Activated naive CD4-positive, alpha-beta T cell treated with anti-CD3 and anti-CD28 coated beads for 36 hours (primary cell): ENCODE measurements at regions of chr2 and their contacts with region 1.

Region 1: GRCh38 chr2:1136057-1136456 is 185.4 kb downstream of the SNTG2 start:
- DNase-seq: no peak
- H3K4me3 Mint-ChIP-seq: no peak overlapping the region
- H3K27ac Mint-ChIP-seq: no peak overlapping the region
- H3K4me1 Mint-ChIP-seq: peaks cover 36% of the 10 kb centered on the region
- H3K27me3 Mint-ChIP-seq: no peaks in the 10 kb centered on the region

Region 2: GRCh38 chr2:264660-265468 is 871.2 kb before region 1 on chr2 and contains the start of gene ACP1:
- CTCF ChIA-PET with region 1: no interaction called
- intact Hi-C with region 1: loop called (anchors 10 kb)
- DNase-seq: peak; percentile 94
- H3K4me3 Mint-ChIP-seq: peak within 1 kb of the TSS; percentile 91
- H3K27ac Mint-ChIP-seq: peak within 1 kb of the TSS; percentile 90
- H3K4me1 Mint-ChIP-seq: peaks cover 40% of the 10 kb centered on the region
- H3K27me3 Mint-ChIP-seq: no peaks in the 10 kb centered on the region
- total RNA-seq, gene ACP1: 144 to 147 TPM

Region 3: DNA sequence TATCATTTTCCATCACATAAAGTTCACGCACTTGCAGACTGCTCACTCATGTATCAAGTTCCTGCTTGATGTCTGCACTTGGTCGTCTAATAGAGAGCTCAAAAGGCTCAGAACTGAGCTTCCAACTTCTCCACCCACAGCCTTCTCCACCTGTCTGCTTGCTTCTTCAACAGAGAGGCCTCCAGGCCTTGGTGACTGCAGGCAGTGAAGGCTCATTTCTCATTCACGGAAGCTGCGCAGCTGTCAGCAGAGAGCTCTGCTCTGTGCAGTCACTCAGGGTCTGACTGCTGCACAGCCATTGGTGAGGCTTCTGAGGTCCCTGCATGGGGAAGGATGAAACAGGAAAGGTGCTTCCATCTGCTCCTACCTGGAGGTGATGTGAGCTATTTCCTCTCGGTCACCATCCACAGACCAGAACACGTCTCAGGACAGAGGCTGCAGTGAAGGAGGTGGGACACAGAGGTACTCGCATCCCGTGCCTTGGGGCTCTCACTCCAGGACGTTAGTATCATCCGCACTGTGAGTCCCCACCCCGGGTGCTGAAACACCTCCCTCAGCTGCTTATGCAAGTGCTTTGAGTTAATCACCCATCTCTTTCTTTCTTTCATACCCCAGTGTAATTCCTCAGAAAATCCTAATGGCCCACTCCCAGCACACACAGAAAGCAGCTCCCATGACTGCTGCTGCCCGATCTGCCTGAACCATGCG is 585.0 kb before region 1 on chr2:
- CTCF ChIA-PET with region 1: no interaction called
- intact Hi-C with region 1: no loop called
- DNase-seq: no peak
- H3K4me3 Mint-ChIP-seq: no peak overlapping the region
- H3K27ac Mint-ChIP-seq: no peak overlapping the region
- H3K4me1 Mint-ChIP-seq: no peaks in the 10 kb centered on the region
- H3K27me3 Mint-ChIP-seq: peaks cover 10% of the 10 kb centered on the region

Region 4: DNA sequence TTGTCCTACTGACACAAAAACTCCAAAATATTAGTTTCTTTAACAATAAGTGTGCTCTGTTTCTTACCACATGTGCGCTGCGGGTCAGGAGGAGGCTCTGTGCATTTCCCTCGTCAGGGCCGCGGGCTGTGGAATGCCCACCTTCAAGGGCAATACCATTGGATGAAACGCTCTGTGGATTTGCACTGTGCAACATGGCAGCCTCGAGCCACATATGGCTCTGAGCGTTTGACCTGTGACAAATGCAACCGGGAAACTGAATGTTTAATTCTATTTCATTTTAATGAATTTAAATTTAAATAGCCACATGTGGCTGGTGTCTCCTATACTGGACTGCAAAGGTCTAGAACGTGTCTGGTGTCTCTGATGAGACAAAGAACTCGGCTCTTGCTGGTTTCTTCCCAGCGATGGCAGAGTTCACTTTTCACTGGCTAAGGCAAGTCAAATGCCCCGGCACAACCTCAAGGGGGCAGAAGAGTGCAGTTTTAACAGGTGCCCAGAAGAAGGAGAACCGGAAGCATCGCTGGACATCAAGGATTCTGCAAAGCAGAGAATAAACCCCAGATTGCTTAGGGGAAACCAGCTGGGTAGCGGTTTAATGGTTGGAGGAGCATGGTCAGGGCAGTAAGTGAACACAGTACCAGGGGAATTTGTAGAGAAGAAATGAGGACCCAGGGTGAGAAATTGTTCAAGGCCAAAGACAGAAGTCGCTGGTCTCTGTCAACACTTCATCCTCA is 421.9 kb before region 1 on chr2:
- CTCF ChIA-PET with region 1: no interaction called
- intact Hi-C with region 1: loop called (anchors 10 kb)
- DNase-seq: peak; percentile 58
- H3K4me3 Mint-ChIP-seq: no peak overlapping the region
- H3K27ac Mint-ChIP-seq: no peak overlapping the region
- H3K4me1 Mint-ChIP-seq: no peaks in the 10 kb centered on the region
- H3K27me3 Mint-ChIP-seq: peaks cover 27% of the 10 kb centered on the region

Region 5: DNA sequence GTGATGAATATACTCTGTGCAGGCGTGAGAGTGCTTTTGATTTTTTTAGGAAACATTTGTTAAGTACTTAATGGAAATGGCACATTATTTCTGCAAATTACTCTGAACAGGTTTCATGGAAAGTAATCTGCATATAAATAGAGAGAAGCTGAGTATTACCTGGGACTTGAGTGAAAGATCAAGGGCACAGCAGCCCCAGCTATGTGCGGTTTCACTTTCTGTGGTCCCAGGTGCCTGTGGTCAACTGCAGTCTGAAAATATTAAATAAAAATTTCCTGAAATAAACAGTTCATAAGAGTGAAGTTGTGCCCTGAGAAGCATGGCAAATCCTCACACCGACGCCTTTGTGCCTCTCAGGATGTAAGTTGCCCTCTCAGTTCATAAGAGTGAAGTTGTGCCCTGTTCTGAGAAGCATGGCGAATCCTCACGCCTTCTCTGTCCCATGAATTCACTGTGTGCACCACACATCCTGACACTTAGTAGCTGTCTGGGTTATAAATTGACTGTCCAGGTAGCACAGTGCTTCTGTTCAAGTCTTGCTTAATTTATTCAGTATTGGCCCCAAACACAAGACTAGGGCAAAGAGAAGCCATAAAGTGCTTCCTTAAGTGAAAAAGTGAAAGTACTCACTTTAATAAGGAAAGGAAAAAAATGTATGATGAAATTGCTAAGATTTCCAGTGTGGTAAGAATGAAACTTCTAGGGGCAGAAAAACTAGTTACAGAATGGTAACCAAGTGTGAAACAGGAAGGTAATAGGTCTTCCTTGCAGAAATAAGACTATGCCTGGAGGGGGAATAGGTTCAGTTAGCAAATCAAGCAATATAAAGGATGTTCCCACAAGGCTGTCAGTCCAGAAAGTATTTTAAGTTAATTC is 189.7 kb before region 1 on chr2:
- CTCF ChIA-PET with region 1: interaction called, 3 read pairs
- intact Hi-C with region 1: loop called (anchors 2 kb)
- DNase-seq: peak; percentile 30
- H3K4me3 Mint-ChIP-seq: peak overlapping the region; percentile 42
- H3K27ac Mint-ChIP-seq: peak overlapping the region; percentile 84
- H3K4me1 Mint-ChIP-seq: peaks cover 28% of the 10 kb centered on the region
- H3K27me3 Mint-ChIP-seq: peaks cover 10% of the 10 kb centered on the region

Region 6: GRCh38 chr2:1162768-1163584 is 26.9 kb after region 1 on chr2:
- CTCF ChIA-PET with region 1: interaction called, 3 read pairs
- intact Hi-C with region 1: loop called (anchors 2 kb)
- DNase-seq: peak; percentile 77
- H3K4me3 Mint-ChIP-seq: no peak overlapping the region
- H3K27ac Mint-ChIP-seq: peak overlapping the region; percentile 92
- H3K4me1 Mint-ChIP-seq: peaks cover 41% of the 10 kb centered on the region
- H3K27me3 Mint-ChIP-seq: no peaks in the 10 kb centered on the region

Region 7: GRCh38 chr2:1321321-1321720 is 185.3 kb after region 1 on chr2:
- CTCF ChIA-PET with region 1: no interaction called
- intact Hi-C with region 1: no loop called
- DNase-seq: no peak
- H3K4me3 Mint-ChIP-seq: no peak overlapping the region
- H3K27ac Mint-ChIP-seq: no peak overlapping the region
- H3K4me1 Mint-ChIP-seq: no peaks in the 10 kb centered on the region
- H3K27me3 Mint-ChIP-seq: peaks cover 2% of the 10 kb centered on the region

Region 8: DNA sequence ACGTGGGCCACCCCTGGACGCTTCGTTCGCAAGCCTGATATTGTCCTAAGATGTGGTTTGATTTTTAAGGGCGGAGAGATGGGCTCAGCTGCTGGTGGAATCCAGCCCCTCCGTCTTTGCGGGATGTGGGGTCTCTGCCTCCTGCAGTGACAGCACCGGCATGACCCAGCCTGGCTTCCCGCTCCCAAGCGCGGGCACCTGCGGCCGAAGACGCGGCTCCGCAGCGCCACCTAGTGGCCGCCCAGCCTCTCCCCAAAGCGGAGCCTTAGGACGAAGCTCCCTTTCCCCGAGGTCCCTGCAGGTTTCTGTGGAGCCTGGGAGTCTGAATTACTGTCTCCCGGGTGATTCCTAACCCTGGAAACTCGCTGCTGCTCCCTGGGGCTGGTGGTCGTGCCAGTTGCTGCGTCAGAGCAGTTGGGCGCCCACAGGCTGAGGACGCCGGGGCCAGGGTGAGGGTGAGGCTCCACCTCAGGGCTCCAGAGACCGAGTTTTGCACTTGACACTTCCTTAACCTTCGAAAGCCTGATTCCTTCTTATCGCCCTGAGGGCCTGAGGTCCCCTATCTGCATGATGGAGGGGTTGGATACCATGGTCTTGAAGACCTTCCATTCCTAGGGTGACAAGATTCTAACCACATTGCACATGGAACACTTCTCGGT is 414.7 kb after region 1 on chr2:
- CTCF ChIA-PET with region 1: interaction called, 5 read pairs
- intact Hi-C with region 1: loop called (anchors 10 kb)
- DNase-seq: peak; percentile 68
- H3K4me3 Mint-ChIP-seq: no peak overlapping the region
- H3K27ac Mint-ChIP-seq: no peak overlapping the region
- H3K4me1 Mint-ChIP-seq: peaks cover 15% of the 10 kb centered on the region
- H3K27me3 Mint-ChIP-seq: no peaks in the 10 kb centered on the region

Region 9: GRCh38 chr2:1584691-1585485 is 448.8 kb after region 1 on chr2:
- CTCF ChIA-PET with region 1: no interaction called
- intact Hi-C with region 1: no loop called
- DNase-seq: no peak
- H3K4me3 Mint-ChIP-seq: no peak overlapping the region
- H3K27ac Mint-ChIP-seq: no peak overlapping the region
- H3K4me1 Mint-ChIP-seq: no peaks in the 10 kb centered on the region
- H3K27me3 Mint-ChIP-seq: peaks cover 15% of the 10 kb centered on the region